ENCODE measurements at regions of chr11 and their contacts with region 1.

Region 1: DNA sequence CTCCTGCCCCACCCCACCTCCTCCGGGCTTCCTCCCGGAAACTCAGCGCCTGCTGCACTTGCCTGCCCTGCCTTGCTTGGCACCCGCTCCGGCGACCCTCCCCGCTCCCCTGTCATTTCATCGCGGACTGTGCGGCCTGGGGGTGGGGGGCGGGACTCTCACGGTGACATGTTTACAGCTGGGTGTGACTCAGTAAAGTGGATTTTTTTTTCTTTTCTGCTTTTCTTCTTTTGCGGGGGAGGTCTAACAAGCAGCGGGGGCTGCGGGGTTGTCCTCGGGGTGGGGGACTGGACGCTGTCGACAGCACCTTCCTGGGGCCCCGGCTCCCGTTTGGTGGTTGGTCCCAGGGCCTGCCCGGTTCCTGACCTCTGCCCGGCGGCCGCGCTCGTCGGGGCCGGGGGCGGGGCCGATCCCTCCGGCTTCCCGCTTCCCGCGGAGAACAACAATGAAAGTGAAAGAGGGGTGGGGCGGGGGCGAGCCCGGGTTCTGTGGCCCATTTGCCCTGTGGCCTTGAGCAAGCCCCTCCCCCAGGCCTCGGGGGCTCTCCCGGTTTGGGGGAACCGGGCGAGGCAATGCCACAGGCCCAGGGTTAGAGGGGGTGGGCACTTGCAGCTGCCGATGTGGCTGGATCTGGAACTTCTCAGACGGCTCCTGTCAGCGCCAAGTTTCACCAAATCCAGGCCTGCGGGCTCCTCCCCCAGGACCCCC is 975 bp upstream of the MDK start:
- DNase-seq: peak; percentile 90
- H3K4me3 Mint-ChIP-seq: peak overlapping the region; percentile 67
- H3K27ac Mint-ChIP-seq: peak overlapping the region; percentile 15
- H3K4me1 Mint-ChIP-seq: peaks cover 11% of the 10 kb centered on the region
- H3K27me3 Mint-ChIP-seq: peaks cover 7% of the 10 kb centered on the region

Region 2: GRCh38 chr11:46176402-46176801 is 204.1 kb before region 1 on chr11:
- CTCF ChIA-PET with region 1: no interaction called
- intact Hi-C with region 1: no loop called
- DNase-seq: no peak
- H3K4me3 Mint-ChIP-seq: no peak overlapping the region
- H3K27ac Mint-ChIP-seq: no peak overlapping the region
- H3K4me1 Mint-ChIP-seq: no peaks in the 10 kb centered on the region
- H3K27me3 Mint-ChIP-seq: peaks cover 6% of the 10 kb centered on the region

Region 3: GRCh38 chr11:46332568-46333393 is 47.7 kb before region 1 on chr11:
- CTCF ChIA-PET with region 1: no interaction called
- intact Hi-C with region 1: no loop called
- DNase-seq: peak; percentile 62
- H3K4me3 Mint-ChIP-seq: peak overlapping the region; percentile 80
- H3K27ac Mint-ChIP-seq: no peak overlapping the region
- H3K4me1 Mint-ChIP-seq: peaks cover 76% of the 10 kb centered on the region
- H3K27me3 Mint-ChIP-seq: no peaks in the 10 kb centered on the region

Region 4: GRCh38 chr11:46346886-46347636 is 33.4 kb before region 1 on chr11 and contains the start of gene DGKZ:
- CTCF ChIA-PET with region 1: interaction called, 13 read pairs
- intact Hi-C with region 1: loop called (anchors 1 kb)
- DNase-seq: peak; percentile 86
- H3K4me3 Mint-ChIP-seq: peak within 1 kb of the TSS; percentile 84
- H3K27ac Mint-ChIP-seq: peak within 1 kb of the TSS; percentile 92
- H3K4me1 Mint-ChIP-seq: peaks cover 80% of the 10 kb centered on the region
- H3K27me3 Mint-ChIP-seq: no peaks in the 10 kb centered on the region
- total RNA-seq, gene DGKZ: 82.9 to 89.2 TPM

Region 5: GRCh38 chr11:46352063-46352841 is 28.2 kb before region 1 on chr11:
- CTCF ChIA-PET with region 1: interaction called, 13 read pairs
- intact Hi-C with region 1: loop called (anchors 1 kb)
- DNase-seq: peak; percentile 81
- H3K4me3 Mint-ChIP-seq: peak overlapping the region; percentile 77
- H3K27ac Mint-ChIP-seq: peak overlapping the region; percentile 90
- H3K4me1 Mint-ChIP-seq: peaks cover 77% of the 10 kb centered on the region
- H3K27me3 Mint-ChIP-seq: no peaks in the 10 kb centered on the region

Region 6: DNA sequence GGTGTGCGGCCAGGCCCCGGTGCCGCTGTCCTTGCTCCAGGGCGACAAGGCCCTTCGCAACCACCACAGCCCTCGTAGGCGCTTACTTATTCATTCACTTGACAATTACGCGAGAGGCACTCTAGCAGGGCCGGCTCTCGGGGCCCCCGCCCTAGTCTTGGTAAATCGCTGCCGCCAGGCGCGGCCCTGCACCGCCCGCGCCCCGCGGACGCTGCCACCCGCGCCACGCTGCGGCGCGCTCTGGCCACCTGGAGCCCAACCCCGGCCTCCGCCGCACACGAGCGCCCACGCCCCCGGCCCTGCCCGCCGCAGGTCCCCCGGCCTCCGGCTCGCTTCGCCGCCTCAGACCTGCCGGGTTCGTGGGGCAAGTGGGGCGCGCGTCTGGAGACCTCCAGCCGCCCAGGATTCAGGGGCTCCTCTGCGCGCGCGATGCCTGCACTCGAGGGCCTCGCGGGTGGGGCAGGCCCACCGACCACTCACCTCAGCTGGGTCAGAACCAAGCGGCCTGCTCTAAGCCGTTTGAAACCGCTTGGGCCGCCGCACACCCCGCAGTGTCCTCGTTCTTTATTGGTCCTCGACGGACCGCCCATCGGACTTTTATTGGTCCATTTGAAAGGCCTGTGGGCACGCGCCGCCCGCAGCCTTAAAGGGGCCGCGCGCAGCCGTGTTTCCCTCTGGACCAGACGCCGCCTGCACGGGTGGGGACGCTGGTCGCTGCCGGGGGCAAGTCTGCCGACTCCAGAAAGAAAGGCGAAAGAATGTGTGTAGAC is 465.4 kb after region 1 on chr11 and contains the start of gene CKAP5:
- CTCF ChIA-PET with region 1: no interaction called
- intact Hi-C with region 1: loop called (anchors 1 kb)
- DNase-seq: peak; percentile 91
- H3K4me3 Mint-ChIP-seq: peak within 1 kb of the TSS; percentile 95
- H3K27ac Mint-ChIP-seq: peak within 1 kb of the TSS; percentile 91
- H3K4me1 Mint-ChIP-seq: peaks cover 33% of the 10 kb centered on the region
- H3K27me3 Mint-ChIP-seq: no peaks in the 10 kb centered on the region
- total RNA-seq, gene CKAP5: 205 to 216 TPM